ENCODE measurements at regions of chr19 and their contacts with region 1.

Region 1: GRCh38 chr19:56176881-56177280 is 1.1 kb downstream of the GALP start:
- DNase-seq: no peak
- ATAC-seq: no peak
- H3K4me3 ChIP-seq: no peak overlapping the region
- H3K4me3 Mint-ChIP-seq: no peak overlapping the region
- H3K27ac ChIP-seq: no peak overlapping the region
- H3K27ac Mint-ChIP-seq: no peak overlapping the region
- H3K4me1 ChIP-seq: peaks cover 0 to under 1% of the 10 kb centered on the region in 2 donors
- H3K4me1 Mint-ChIP-seq: no peaks in the 10 kb centered on the region
- H3K27me3 ChIP-seq: no peaks in the 10 kb centered on the region
- H3K27me3 Mint-ChIP-seq: peaks cover 10% of the 10 kb centered on the region
- CTCF ChIP-seq: no peak

Region 2: DNA sequence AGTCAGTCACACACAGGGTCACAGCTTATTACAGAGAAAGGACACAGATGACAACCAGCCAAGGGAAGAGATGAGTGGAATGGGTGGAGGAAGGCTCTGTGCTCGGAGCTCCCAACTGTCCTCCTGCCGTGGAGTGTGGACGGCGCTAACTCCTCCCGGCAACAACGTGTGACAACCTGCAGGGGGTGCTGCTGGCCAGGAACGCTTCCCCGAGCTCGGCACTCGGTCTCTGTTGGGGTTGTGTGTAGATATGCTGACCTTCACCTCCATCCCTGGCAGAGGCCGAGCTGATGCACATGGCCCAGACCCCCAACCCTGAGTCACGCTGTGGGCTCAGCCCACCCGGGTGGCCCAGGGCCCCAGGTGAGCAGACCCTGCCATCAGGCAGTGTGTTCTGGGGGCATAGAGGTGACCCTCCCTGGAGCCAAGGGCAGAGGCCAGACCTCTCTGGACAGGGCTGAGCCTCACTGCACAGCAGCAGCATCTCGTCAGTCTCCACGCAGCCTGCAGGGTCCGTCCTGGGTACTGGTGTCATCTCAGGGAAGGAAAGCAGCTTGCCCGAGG is 21.7 kb before region 1 on chr19:
- CTCF ChIA-PET with region 1: interaction called, 6 read pairs
- POLR2A ChIA-PET with region 1: interaction called, 11 read pairs
- intact Hi-C with region 1: no loop called
- DNase-seq: no peak
- ATAC-seq: no peak
- H3K4me3 ChIP-seq: no peak overlapping the region
- H3K4me3 Mint-ChIP-seq: no peak overlapping the region
- H3K27ac ChIP-seq: no peak overlapping the region
- H3K27ac Mint-ChIP-seq: no peak overlapping the region
- H3K4me1 ChIP-seq: no peaks in the 10 kb centered on the region
- H3K4me1 Mint-ChIP-seq: no peaks in the 10 kb centered on the region
- H3K27me3 ChIP-seq: no peaks in the 10 kb centered on the region
- H3K27me3 Mint-ChIP-seq: no peaks in the 10 kb centered on the region
- CTCF ChIP-seq: no peak

Region 3: DNA sequence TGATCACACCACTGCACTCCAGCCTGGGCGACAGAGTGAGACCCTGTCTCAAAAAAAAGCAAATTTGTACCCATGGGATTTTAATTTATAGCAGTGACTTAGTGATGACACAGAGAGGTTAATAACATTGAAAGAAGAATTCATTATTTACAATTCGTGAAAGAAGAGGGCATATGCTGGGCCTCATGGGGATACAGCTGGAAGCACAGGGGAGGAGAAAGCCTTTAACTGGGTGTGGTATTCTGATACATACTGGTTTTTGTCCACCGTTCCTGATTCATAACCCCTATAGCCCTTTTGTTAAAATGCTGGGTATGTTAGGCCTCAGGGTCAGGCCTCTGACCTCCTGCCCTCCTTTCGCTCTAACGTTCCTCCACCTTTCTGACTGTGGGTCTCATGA is 1025.3 kb after region 1 on chr19:
- CTCF ChIA-PET with region 1: no interaction called
- POLR2A ChIA-PET with region 1: no interaction called
- intact Hi-C with region 1: no loop called
- DNase-seq: no peak
- ATAC-seq: no peak
- H3K4me3 ChIP-seq: no peak overlapping the region
- H3K4me3 Mint-ChIP-seq: no peak overlapping the region
- H3K27ac ChIP-seq: no peak overlapping the region
- H3K27ac Mint-ChIP-seq: no peak overlapping the region
- H3K4me1 ChIP-seq: no peaks in the 10 kb centered on the region
- H3K4me1 Mint-ChIP-seq: peaks cover 13% of the 10 kb centered on the region
- H3K27me3 ChIP-seq: no peaks in the 10 kb centered on the region
- H3K27me3 Mint-ChIP-seq: no peaks in the 10 kb centered on the region
- CTCF ChIP-seq: no peak